Activated T-helper 1 cell treated with anti-CD3 and anti-CD28 coated beads, Interleukin-12 subunit alpha, Interleukin-12 subunit beta, Interleukin-2, Interleukin-4 antibody, amounts not matched to agents 30 ng/mL and 10 ng/mL and 1 ng/mL, durations not matched to agents 14 hours and 24 hours and 36 hours (primary cell): ENCODE measurements at regions of chrX and their contacts with region 1.

Region 1: GRCh38 chrX:2707334-2707760 is 16.3 kb downstream of the CD99 start:
- DNase-seq: peak; percentile 59
- H3K4me3 Mint-ChIP-seq: peak overlapping the region; percentile 68
- H3K27ac Mint-ChIP-seq: peak overlapping the region; percentile 88
- H3K4me1 Mint-ChIP-seq: peaks cover 73% of the 10 kb centered on the region
- H3K27me3 Mint-ChIP-seq: no peaks in the 10 kb centered on the region

Region 2: DNA sequence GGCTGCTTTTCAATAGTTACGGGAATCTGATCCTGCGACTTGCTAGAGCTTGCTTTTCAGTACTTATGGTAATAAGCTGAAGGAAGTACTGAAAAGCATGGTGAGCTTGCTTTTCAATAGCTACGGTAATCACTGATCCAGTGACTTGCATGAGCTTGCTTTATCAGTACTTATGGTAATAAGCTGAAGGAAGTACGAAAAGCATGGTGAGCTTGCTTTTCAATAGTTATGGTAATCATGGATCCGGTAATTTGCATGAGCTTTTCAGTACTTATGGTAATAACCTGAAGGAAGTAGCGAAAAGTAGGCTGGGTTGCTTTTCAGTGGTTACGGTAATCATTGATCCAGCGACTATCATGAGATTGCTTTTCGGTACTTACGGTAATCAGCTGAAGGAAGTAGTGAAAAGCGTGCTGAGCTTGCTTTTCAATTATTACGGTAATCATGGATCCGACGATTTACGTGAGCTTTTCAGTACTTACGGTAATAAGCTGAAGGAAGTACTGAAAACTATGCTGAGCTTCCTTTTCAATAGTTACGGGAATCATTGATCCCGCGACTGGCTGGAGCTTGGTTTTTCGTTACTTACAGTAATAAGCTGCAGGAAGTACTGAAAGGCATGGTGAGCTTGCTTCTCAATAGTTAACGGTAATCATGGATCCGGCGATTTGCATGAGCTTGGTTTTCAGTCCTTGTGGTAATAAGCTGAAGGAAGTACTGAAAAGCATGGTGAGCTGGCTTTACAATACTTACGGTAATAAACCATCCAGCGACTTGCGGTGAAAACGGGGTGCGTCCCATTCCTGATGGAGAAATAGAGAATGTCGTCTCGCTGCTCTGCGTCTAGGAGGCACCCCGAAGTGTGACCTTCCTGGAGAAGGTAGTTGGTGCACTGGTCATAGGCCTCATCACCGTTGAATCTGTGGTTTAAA is 1501.4 kb before region 1 on chrX:
- intact Hi-C with region 1: loop called (anchors 10 kb)
- DNase-seq: peak; percentile 32
- H3K4me3 Mint-ChIP-seq: peak overlapping the region; percentile 57
- H3K27ac Mint-ChIP-seq: no peak overlapping the region
- H3K4me1 Mint-ChIP-seq: peaks cover 31% of the 10 kb centered on the region
- H3K27me3 Mint-ChIP-seq: peaks cover 1% of the 10 kb centered on the region

Region 3: DNA sequence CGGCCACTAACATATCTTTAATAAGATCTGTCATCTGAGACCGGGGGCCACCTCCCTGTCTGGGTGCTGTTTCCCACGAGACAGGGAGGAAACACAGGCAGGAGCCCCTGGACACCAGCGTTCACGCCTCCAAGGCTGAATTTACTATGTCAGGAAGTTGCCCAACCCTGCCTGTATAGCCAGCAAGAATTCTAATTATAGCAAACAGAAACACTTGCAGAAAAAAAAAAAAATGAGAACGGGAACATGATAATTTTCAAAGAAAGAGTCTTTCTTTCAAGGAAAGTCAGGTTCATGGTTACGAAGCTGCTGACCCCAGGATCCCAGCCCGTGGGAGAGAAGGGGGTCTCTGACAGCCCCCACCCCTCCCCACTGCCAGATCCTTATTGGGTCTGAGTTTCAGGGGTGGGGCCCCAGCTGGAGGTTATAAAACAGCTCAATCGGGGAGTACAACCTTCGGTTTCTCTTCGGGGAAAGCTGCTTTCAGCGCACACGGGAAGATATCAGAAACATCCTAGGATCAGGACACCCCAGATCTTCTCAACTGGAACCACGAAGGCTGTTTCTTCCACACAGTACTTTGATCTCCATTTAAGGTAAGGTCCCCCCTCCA is 1370.9 kb before region 1 on chrX and contains the start of gene IL3RA:
- intact Hi-C with region 1: loop called (anchors 10 kb)
- DNase-seq: peak; percentile 29
- H3K4me3 Mint-ChIP-seq: peak within 1 kb of the TSS; percentile 85
- H3K27ac Mint-ChIP-seq: peak within 1 kb of the TSS; percentile 53
- H3K4me1 Mint-ChIP-seq: peaks cover 27% of the 10 kb centered on the region
- H3K27me3 Mint-ChIP-seq: no peaks in the 10 kb centered on the region
- total RNA-seq, gene IL3RA: 4.2 and 5.3 TPM in 2 replicates

Region 4: GRCh38 chrX:2500267-2501075 is 206.9 kb before region 1 on chrX and contains the starts of genes DHRSX and ZBED1:
- intact Hi-C with region 1: loop called (anchors 5 kb)
- DNase-seq: peak; percentile 53
- H3K4me3 Mint-ChIP-seq: peak within 1 kb of the TSS; percentile 88
- H3K27ac Mint-ChIP-seq: peak within 1 kb of the TSS; percentile 80
- H3K4me1 Mint-ChIP-seq: peaks cover 27% of the 10 kb centered on the region
- H3K27me3 Mint-ChIP-seq: peaks cover 2% of the 10 kb centered on the region
- total RNA-seq, gene DHRSX: 26.3 and 27.4 TPM in 2 replicates
- total RNA-seq, gene ZBED1: 39.8 and 41.6 TPM in 2 replicates

Region 5: GRCh38 chrX:2647627-2648026 is 59.7 kb before region 1 on chrX:
- intact Hi-C with region 1: loop called (anchors 1 kb)
- DNase-seq: no peak
- H3K4me3 Mint-ChIP-seq: peak overlapping the region; percentile 57
- H3K27ac Mint-ChIP-seq: peak overlapping the region; percentile 79
- H3K4me1 Mint-ChIP-seq: peaks cover 25% of the 10 kb centered on the region
- H3K27me3 Mint-ChIP-seq: no peaks in the 10 kb centered on the region

Region 6: DNA sequence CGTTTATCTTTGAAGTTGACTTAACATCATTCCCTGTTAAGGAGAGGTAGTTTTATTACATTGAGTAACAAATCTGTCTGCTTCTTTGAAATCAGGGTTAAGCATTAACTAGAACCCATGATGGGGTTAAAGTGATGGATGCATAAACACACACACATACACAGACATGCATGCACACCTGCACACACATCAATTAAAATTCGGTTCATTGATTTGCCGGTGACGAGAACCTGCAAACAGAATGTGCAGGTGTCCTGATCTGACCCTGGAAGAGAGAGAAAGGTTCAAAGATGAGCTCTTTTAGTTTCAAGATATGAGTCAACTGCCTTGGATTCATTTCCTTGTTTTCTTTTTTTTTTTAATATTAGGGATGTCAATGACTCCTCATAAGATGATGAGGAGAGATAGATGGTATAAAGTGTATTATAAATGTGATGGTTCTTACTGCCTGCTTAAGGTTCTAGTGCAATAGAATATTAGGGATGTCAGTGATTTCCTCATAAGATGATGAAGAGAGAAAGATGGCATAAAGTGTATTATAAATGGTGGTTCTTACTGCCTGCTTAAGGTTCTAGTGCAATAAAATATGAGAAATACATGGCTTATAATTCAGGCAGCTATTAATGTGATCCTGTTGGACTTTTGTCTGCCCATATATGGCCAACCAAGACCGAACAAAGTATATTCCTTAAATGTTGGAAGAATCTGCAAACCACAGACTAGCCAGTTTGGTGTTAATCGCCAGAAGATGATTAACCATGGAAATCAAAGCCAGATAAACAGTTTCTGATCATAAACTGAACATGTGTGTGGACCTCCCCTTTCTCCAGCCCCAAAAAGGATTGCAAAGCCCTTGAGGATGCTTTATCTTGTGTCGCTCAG is 30.3 kb before region 1 on chrX:
- intact Hi-C with region 1: no loop called
- DNase-seq: no peak
- H3K4me3 Mint-ChIP-seq: no peak overlapping the region
- H3K27ac Mint-ChIP-seq: no peak overlapping the region
- H3K4me1 Mint-ChIP-seq: no peaks in the 10 kb centered on the region
- H3K27me3 Mint-ChIP-seq: no peaks in the 10 kb centered on the region

Region 7: DNA sequence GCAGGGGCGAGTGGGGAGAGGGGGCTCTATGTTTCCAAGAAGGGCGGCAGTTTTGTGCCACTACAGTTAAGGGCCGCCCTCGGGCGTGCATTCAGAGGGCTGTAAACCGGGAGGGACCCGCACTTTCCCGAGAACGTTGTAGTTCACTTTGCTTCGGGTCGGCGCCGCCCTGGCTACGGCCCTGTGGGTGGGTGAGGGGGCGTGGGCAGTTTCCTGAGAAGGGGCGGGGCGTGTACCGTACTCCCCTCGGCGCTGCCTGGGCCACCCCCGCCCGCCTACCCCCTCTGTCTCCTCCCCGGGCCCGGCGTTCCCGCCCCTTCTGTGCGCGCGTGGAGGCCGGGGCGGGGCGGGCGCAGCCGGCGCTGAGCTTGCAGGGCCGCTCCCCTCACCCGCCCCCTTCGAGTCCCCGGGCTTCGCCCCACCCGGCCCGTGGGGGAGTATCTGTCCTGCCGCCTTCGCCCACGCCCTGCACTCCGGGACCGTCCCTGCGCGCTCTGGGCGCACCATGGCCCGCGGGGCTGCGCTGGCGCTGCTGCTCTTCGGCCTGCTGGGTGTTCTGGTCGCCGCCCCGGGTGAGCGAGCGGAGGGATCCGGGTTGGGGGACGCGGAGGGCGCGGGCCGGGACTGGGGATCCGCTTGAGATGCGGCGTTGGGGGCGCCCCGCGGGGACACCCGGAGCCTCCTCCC is 16.3 kb before region 1 on chrX and contains the start of gene CD99:
- intact Hi-C with region 1: loop called (anchors 1 kb)
- DNase-seq: peak; percentile 90
- H3K4me3 Mint-ChIP-seq: peak within 1 kb of the TSS; percentile 99
- H3K27ac Mint-ChIP-seq: peak within 1 kb of the TSS; percentile 99
- H3K4me1 Mint-ChIP-seq: peaks cover 31% of the 10 kb centered on the region
- H3K27me3 Mint-ChIP-seq: peaks cover 5% of the 10 kb centered on the region
- total RNA-seq, gene CD99: 421 and 437 TPM in 2 replicates

Region 8: GRCh38 chrX:2696698-2697215 is 10.6 kb before region 1 on chrX:
- intact Hi-C with region 1: loop called (anchors 1 kb)
- DNase-seq: peak; percentile 63
- H3K4me3 Mint-ChIP-seq: peak overlapping the region; percentile 99
- H3K27ac Mint-ChIP-seq: peak overlapping the region; percentile 99
- H3K4me1 Mint-ChIP-seq: peaks cover 86% of the 10 kb centered on the region
- H3K27me3 Mint-ChIP-seq: no peaks in the 10 kb centered on the region